ENCODE measurements at regions of chr2 and their contacts with region 1.

Region 1: DNA sequence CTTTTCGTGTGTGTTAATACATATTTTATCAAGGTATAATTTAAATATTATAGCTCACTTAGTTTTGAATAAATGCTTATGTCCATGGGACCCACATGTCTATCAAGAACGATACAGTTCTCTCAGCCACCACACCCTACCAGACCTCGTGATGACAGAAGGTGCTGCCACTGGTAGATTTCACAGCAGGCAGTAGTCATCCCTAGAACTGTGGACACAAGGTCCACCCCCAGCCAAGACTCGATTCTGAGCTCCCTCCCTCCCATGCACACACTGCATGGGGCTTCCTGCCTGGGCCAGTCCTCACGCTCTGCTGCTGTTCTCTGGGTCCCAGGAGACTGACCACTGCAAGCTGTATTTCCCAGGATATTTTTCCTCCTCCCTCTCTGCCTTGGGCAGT is 26.5 kb upstream of the CREB1 start:
- DNase-seq: peak in 1 of 2 donors; percentile 66
- ATAC-seq: no peak
- H3K4me3 ChIP-seq: no peak overlapping the region
- H3K27ac ChIP-seq: peak overlapping the region in 1 of 2 donors; percentile 24
- H3K4me1 ChIP-seq: peaks cover 1 to 9% of the 10 kb centered on the region in 2 donors
- H3K27me3 ChIP-seq: no peaks in the 10 kb centered on the region

Region 2: DNA sequence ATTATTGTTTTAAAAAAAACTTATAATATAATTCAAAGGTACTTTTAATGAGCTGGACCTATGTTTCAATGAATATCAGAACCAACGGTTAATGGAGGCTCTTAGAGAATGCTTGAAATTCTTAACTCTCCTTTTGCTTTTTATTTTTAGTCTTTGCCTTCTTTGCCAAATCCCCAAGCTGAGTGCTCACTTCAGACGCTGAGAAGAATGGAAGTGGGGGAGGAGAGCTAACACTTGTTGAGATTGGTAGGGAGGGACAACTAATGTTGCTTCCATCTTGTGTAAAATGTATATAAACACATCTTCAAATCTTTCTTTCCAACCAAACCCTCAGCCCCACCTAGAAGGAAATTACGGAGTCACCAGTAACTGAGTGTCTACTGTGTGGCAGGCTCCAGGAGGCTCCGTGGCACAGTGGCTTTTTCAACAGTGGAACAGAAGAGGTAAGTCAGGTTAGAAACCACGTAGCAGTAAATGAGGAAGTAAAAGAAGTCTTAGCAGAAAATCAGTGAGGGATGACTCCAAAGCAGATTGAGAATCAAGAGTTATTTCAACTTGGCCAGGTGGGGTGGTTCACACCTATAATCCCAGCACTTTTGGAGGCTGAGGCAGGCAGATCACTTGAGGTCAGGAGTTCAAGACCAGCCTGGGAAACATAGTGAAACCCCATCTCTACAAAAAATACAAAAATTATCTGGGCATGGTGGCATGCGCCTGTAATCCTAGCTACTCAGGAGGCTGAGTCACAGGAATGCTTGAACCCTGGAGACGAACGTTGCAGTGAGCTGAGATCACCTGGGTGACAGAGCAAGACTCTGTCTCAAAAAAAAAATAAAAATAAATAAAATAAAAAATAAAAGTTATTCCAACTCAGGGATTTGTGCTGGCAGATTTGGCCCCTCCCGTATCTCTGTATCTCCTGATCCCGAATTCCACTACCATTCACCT is 18.5 kb before region 1 on chr2:
- intact Hi-C with region 1: loop called in 1 of 2 experiments (anchors 2 kb)
- DNase-seq: no peak
- ATAC-seq: no peak
- H3K4me3 ChIP-seq: no peak overlapping the region
- H3K27ac ChIP-seq: peak overlapping the region in 1 of 2 donors; percentile 48
- H3K4me1 ChIP-seq: peaks cover 5 to 8% of the 10 kb centered on the region in 2 donors
- H3K27me3 ChIP-seq: no peaks in the 10 kb centered on the region

Region 3: DNA sequence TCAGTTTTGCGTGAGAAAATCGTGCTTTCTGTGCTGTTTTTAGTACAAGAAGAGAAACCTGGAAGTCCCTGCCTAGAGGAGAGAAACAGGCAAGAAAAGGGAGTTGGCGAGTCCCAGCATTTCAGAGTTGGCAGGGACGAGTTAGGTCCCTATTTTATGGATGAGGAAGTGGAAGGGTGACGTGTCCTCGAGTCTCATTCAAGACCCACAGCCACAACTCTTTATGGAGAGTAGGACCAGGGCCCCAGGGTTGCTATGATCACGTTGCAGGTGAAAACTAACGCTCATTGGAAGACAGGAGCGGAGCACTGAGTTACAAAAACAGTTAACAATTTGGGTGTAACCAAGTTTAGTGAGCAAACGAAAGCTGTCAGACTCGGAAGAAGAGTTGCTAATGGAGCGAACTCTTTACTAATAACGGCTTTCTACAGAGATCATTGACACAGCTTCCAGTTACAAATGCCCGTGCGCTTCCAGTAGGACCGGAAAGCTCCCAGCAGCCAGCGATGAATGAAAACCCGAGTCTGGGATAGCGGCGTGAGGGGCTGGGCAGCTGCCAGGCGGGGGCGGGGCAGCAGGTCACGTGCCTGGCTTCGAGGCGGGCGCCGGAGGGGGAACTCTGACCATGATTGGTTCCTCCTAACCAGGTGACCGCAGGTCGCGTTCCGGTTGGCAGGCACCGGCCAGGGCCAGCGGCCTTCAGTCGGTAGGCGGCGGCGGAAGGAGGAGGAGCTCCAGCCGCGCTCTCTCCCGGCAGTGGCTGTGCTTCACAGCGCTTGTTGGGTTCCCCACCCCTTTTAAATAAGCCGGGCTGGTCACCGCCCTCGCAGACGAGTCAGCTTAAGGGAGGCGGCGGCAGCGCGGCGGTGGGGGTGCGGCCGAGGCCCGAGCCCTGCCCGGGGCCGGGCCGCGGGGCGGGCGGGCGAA is 207.8 kb after region 1 on chr2 and contains the start of gene CCNYL1:
- intact Hi-C with region 1: loop called in 1 of 2 experiments (anchors 10 kb)
- DNase-seq: peak; percentile 100
- ATAC-seq: peak; percentile 100
- H3K4me3 ChIP-seq: peak within 1 kb of the TSS; percentile 57 to 81
- H3K27ac ChIP-seq: peak within 1 kb of the TSS; percentile 88 to 90
- H3K4me1 ChIP-seq: no peaks in the 10 kb centered on the region
- H3K27me3 ChIP-seq: no peaks in the 10 kb centered on the region
- total RNA-seq, gene CCNYL1: 22.4 to 37.1 TPM

Region 4: DNA sequence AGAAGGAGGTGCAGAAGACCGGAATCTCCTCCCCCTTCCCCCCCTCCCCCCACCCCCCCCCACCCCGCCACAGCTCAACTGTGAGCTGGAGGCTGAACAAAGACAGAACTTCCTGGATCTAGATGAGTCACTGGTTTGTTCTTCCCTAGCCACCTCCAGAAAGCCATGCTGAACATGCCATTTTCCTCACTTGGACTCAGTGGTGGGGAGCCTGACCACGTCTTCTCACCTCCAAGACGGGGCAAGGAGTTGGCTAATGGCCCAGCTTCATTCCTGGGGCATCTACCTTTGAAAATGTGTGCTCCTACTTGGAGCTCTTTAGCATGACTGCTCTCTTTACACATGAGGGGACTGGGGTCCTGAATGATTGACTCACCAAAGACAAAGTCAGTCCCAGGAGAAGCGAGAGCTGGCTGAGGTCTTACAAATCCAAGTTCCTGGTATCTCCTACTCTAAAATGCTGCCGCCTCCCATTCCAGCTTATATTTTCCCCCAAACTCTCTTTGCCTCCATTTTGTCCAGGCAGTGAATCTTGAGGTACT is 289.1 kb after region 1 on chr2:
- intact Hi-C with region 1: no loop called
- DNase-seq: no peak
- ATAC-seq: no peak
- H3K4me3 ChIP-seq: no peak overlapping the region
- H3K27ac ChIP-seq: no peak overlapping the region
- H3K4me1 ChIP-seq: no peaks in the 10 kb centered on the region
- H3K27me3 ChIP-seq: no peaks in the 10 kb centered on the region